ENCODE measurements at regions of chr12 and their contacts with region 1.

Region 1: DNA sequence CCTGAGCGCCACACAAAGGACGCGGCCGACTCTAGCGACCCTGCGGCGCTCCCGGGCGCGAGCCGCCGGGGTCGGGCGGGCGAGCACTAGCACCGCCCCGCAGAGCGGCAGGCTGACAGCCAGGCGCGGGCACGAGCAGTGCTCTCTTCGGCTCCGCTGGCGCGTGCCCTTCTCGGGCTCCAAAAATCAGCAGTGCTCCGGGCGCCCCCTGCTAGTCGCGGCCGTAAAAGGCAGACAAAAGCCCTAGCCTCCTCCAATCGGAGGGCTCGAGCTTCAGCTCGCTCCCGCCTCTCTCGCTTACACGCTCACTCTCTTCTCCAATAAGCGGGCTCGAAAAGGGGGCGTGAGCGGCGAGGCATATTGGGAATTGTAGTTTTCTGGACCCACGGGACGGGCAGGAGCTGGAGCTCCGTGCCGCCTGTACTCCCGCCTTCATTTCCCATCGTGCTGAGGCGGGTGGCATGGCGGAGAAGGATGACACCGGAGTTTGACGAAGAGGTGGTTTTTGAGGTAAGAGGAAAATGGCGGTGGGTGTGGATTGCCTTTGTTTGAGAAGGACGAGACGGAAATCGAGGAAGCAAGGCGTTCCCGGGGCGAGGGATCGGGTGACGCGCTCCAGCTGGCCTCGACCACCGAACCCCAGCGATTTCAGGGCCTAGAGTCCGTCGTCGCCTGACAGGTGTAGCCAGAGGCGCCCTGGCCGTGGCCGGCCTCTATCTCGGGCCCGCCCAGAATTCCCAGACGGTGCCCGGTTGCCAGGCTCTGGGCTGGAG is at the starts of genes FGD6 and VEZT:
- DNase-seq: peak; percentile 100
- H3K4me3 ChIP-seq: peak within 1 kb of the TSS; percentile 73 to 89 (median 86)
- H3K27ac ChIP-seq: peak within 1 kb of the TSS; percentile 92 to 99 (median 98)
- H3K4me1 ChIP-seq: peaks cover 28 to 59% (median 57%) of the 10 kb centered on the region in 4 donors
- H3K27me3 ChIP-seq: no peaks in the 10 kb centered on the region
- CTCF ChIP-seq: peak; percentile 42 to 61 (median 53)
- EP300 ChIP-seq: no peak
- POLR2A ChIP-seq: peak; percentile 64
- total RNA-seq, gene FGD6: 30.5 to 48.6 (median 37.3) TPM
- total RNA-seq, gene VEZT: 73.0 to 90.3 (median 87.0) TPM

Region 2: DNA sequence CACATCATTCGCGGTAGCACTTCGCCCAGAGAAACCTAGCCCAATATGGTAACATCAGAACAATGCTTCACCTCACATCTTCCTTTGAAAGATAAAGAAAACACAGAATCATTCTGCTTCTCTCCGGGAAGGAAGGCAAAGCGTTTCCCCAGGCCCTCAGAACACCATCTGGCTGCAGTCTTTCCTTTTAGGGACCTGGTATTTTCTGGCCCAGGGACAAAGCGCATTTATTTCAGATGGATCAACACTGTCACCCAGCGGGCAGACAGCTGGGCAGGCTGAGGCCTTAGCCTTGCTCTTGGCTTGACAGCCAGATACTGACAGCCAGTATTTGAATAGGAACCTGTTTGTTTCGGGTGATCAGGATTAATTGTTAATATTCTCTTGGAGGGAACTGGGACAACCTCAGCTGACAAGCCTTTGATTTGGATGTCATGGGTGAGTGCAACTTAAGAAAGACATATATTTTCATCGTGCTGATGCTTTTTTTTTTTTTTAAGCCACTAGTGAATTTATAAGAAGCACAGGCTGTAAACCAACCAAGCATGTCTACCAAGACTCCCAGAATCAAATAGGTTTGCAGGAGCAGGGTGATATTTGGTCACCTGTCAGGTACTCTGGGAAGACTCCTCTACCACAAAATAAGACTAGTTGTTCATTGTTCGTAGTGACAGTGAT is 119.0 kb after region 1 on chr12:
- intact Hi-C with region 1: loop called (anchors 5 kb)
- DNase-seq: no peak
- H3K4me3 ChIP-seq: peak overlapping the region; percentile 4 to 40 (median 30)
- H3K27ac ChIP-seq: peak overlapping the region; percentile 81 to 86 (median 83)
- H3K4me1 ChIP-seq: peaks cover 10 to 44% (median 39%) of the 10 kb centered on the region in 4 donors
- H3K27me3 ChIP-seq: no peaks in the 10 kb centered on the region
- CTCF ChIP-seq: peak; percentile 64 to 74 (median 68)
- EP300 ChIP-seq: no peak
- POLR2A ChIP-seq: no peak

Region 3: GRCh38 chr12:95532851-95533250 is 315.3 kb after region 1 on chr12:
- intact Hi-C with region 1: loop called (anchors 10 kb)
- DNase-seq: no peak
- H3K4me3 ChIP-seq: no peak overlapping the region
- H3K27ac ChIP-seq: no peak overlapping the region
- H3K4me1 ChIP-seq: peaks cover 0 to 13% (median 11%) of the 10 kb centered on the region in 4 donors
- H3K27me3 ChIP-seq: no peaks in the 10 kb centered on the region
- CTCF ChIP-seq: no peak
- EP300 ChIP-seq: no peak
- POLR2A ChIP-seq: no peak

Measured in esophagus muscularis mucosa (tissue), 4 donors.